Activated naive CD4-positive, alpha-beta T cell treated with anti-CD3 and anti-CD28 coated beads, Interleukin-2, amount 10 ng/mL, durations not matched to agents 7 days and 5 days (primary cell): ENCODE measurements at regions of chr18 and their contacts with region 1.

Region 1: GRCh38 chr18:49021433-49022129 is 70.8 kb upstream of the SMAD7 start:
- DNase-seq: peak; percentile 72
- H3K4me3 Mint-ChIP-seq: no peak overlapping the region
- H3K27ac Mint-ChIP-seq: no peak overlapping the region
- H3K4me1 Mint-ChIP-seq: peaks cover 25% of the 10 kb centered on the region
- H3K27me3 Mint-ChIP-seq: peaks cover 16% of the 10 kb centered on the region

Region 2: DNA sequence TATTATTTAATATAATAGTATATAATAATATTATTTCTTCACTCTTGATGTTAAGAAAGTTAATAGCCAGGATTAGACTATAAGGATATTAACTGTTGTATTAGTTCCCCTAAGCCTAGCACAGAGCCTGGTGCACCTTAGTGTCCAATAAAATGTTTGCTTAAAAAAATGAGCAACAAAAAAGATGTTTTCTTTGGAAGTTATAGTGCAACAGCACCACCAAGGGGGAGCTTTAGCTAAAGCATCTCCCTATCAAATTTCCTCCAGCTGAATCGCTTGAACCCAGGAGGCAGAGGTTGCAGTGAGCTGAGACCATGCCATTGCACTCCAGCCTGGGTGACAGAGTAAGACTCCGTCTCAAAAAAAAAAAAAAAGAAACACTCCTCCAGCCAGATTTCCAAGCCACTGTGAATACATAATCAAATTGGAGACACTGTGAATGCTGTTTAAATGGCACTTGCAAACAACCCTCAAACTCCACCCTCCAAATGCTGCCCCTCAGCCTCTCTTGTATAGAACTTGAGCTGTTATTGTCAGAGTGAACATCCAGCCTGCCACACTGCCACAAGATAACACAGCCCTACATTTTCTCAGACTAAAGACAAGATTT is 217.0 kb after region 1 on chr18:
- CTCF ChIA-PET with region 1: interaction called, 16 read pairs
- DNase-seq: peak; percentile 35
- H3K4me3 Mint-ChIP-seq: no peak overlapping the region
- H3K27ac Mint-ChIP-seq: no peak overlapping the region
- H3K4me1 Mint-ChIP-seq: no peaks in the 10 kb centered on the region
- H3K27me3 Mint-ChIP-seq: no peaks in the 10 kb centered on the region